K562 (cell line): ENCODE measurements at regions of chr2 and their contacts with region 1.

Region 1: DNA sequence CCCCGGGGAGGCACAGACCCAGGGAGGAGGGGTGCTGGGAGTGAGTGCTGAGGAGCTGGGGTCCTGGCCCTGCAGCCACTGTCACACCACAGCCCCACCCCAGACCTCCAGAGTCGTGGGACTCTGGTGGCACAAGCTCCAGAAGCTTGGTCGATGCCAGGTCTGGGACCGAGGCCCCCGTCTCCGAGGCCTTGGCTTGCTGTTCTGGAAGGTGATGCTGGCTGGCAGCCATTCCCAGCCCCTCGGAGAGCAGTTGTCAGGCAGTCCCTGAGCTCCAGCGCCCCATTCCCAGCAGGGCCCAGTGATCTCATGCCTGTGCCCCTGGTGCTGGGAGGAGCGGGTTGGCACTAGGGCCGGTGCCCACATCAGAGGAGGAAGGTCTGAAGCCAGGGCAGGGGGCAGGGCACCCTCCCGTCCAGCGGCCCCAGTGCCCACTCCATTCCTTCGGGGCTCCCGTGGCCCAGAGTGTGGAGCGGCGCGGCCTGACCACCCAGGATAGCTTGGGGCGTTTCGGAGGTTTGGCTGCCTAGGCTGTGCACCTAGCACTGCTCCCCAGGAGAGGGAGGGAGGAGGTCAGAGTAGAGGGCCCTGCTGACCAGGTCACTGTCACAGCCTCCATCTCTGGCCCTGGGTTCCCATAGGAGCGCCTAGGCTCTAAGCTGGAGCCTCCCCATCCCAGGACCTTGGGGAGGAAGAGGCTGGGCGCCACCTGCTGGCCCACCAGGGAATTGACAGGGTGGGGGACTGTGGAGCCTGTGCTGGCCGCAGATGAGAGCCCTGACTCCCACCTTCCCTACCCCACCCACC is 16.8 kb upstream of the ALPI start:
- DNase-seq: peak in 3 of 4 experiments; percentile 14 to 34 (median 17)
- ATAC-seq: peak; percentile 86
- H3K4me3 ChIP-seq: no peak overlapping the region
- H3K27ac ChIP-seq: no peak overlapping the region
- H3K4me1 ChIP-seq: peaks cover 0 to 4% of the 10 kb centered on the region in 2 experiments; a peak in 2 of 5 replicates
- H3K27me3 ChIP-seq: peaks cover 0 to 36% of the 10 kb centered on the region in 2 experiments; a peak in 3 of 5 replicates
- CTCF ChIP-seq: peak in 2 of 3 experiments; percentile 20 to 25; a peak in 3 of 6 replicates
- EP300 ChIP-seq: no peak
- POLR2A ChIP-seq: no peak
- RAD21 ChIP-seq: peak in 1 of 2 experiments; percentile 37; a peak in 2 of 4 replicates

Region 2: DNA sequence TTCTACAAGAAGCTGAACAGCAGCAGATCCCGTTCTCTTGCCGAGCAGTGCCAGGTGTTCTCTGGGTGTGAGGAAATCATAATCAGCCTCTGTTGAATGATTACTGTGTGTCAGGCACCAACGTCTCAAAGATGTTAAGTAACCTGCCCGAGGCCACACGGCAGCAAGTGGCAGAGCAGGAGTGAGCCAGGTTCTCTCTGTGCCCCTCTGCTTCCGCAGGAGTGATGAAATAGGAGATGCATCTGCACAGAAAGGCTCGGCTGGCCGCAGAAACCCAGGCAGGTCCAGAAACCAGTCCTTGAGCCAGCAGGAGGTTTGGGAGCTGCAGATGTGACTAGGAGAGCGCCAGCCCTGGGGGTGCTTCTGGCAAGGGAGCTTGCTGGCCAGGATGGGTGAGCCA is 584.5 kb before region 1 on chr2:
- CTCF ChIA-PET with region 1: no interaction called
- POLR2A ChIA-PET with region 1: no interaction called
- in situ Hi-C with region 1: no loop called
- intact Hi-C with region 1: loop called (anchors 2 kb)
- DNase-seq: no peak
- ATAC-seq: no peak
- H3K4me3 ChIP-seq: no peak overlapping the region
- H3K27ac ChIP-seq: no peak overlapping the region
- H3K4me1 ChIP-seq: no peaks in the 10 kb centered on the region
- H3K27me3 ChIP-seq: peaks cover 3 to 28% of the 10 kb centered on the region in 2 experiments; a peak in 3 of 5 replicates
- CTCF ChIP-seq: no peak
- EP300 ChIP-seq: no peak
- POLR2A ChIP-seq: no peak
- RAD21 ChIP-seq: no peak

Region 3: DNA sequence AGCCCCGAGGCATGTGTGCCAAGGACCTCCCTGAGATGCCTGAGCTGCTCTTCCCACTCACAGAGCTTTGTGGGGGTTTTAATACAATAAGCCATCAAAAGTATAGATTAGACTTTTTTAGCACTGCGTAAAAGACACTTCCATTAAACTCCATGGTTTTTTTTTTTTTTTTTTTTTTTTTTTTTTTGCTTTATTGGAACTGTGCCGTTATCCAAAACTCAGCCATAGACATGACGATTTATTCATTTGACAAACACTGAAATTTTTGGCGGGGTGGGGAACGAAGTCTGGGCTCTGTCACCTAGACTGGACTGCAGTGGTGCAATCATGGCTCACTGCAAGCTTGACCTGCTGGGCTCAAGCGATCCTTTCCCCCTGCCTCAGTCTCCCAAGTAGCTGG is 531.4 kb before region 1 on chr2:
- CTCF ChIA-PET with region 1: no interaction called
- POLR2A ChIA-PET with region 1: no interaction called
- in situ Hi-C with region 1: no loop called
- intact Hi-C with region 1: loop called (anchors 2 kb)
- DNase-seq: no peak
- ATAC-seq: no peak
- H3K4me3 ChIP-seq: no peak overlapping the region
- H3K27ac ChIP-seq: no peak overlapping the region
- H3K4me1 ChIP-seq: peaks cover 2 to 5% of the 10 kb centered on the region in 2 experiments; a peak in 3 of 5 replicates
- H3K27me3 ChIP-seq: peaks cover 3 to 16% of the 10 kb centered on the region in 2 experiments; a peak in 3 of 5 replicates
- CTCF ChIP-seq: no peak
- EP300 ChIP-seq: no peak
- POLR2A ChIP-seq: no peak
- RAD21 ChIP-seq: no peak

Region 4: DNA sequence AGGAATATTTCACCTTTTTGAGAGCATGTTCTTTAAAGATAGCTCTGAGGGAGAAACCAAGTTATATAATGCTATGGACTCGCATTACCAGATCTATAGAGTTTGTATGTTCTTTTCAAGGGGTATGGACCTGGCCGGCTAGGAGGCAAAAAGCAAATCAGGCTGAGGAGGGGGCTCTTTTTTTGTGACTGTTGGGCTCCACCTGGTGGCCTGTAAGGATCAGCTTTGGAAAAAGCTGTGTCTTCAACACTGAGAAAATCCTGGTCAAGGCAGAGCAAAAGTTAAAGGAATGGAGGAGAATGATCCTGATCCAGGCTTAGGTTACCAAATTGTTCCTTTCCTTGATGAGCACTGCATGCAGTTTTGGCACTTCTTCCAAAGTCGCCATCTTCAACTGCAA is 297.1 kb before region 1 on chr2:
- CTCF ChIA-PET with region 1: no interaction called
- POLR2A ChIA-PET with region 1: no interaction called
- in situ Hi-C with region 1: no loop called
- intact Hi-C with region 1: loop called (anchors 10 kb)
- DNase-seq: peak; percentile 20 to 44 (median 30)
- ATAC-seq: peak; percentile 84
- H3K4me3 ChIP-seq: no peak overlapping the region
- H3K27ac ChIP-seq: no peak overlapping the region
- H3K4me1 ChIP-seq: no peaks in the 10 kb centered on the region; a peak in 1 of 5 replicates
- H3K27me3 ChIP-seq: no peaks in the 10 kb centered on the region
- CTCF ChIP-seq: peak; percentile 63 to 73 (median 64)
- EP300 ChIP-seq: no peak
- POLR2A ChIP-seq: no peak
- RAD21 ChIP-seq: peak; percentile 78 to 81

Region 5: GRCh38 chr2:232839411-232840079 is 400.4 kb after region 1 on chr2:
- CTCF ChIA-PET with region 1: no interaction called
- POLR2A ChIA-PET with region 1: no interaction called
- in situ Hi-C with region 1: no loop called
- intact Hi-C with region 1: no loop called
- DNase-seq: peak in 1 of 4 experiments; percentile 13
- ATAC-seq: no peak
- H3K4me3 ChIP-seq: no peak overlapping the region
- H3K27ac ChIP-seq: no peak overlapping the region
- H3K4me1 ChIP-seq: peaks cover 0 to 14% of the 10 kb centered on the region in 2 experiments; a peak in 4 of 5 replicates
- H3K27me3 ChIP-seq: no peaks in the 10 kb centered on the region
- CTCF ChIP-seq: no peak
- EP300 ChIP-seq: no peak
- POLR2A ChIP-seq: no peak
- RAD21 ChIP-seq: no peak